Spleen (tissue), 13 donors: ENCODE measurements at regions of chr6 and their contacts with region 1.

Region 1: DNA sequence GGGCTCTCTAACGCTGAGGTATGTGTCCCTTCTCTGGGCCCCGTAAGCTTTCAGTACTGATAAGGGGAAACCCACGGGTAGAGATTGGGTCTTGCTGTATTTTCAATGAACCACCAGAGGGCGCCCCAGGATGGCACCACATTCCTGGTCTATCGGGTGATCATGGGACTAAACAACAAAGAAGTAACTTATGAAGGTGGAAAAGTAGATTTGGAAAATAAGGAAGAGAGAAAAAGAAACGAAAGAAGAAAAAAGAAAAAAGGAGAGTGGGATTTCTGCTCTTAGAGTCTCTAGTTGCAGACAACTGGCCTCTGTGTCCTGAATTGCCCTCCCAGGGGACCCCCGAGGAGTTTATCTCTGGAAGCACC is 93.8 kb downstream of the GMPR start:
- DNase-seq: peak; percentile 91
- H3K4me3 ChIP-seq: peak overlapping the region in 1 of 8 donors; percentile 34
- H3K27ac ChIP-seq: peak overlapping the region in 4 of 8 donors; percentile 19 to 49 (median 42)
- H3K4me1 ChIP-seq: peaks cover 16 to 52% (median 20%) of the 10 kb centered on the region in 6 donors
- H3K27me3 ChIP-seq: no peaks in the 10 kb centered on the region
- CTCF ChIP-seq: peak; percentile 62 to 92 (median 88)
- POLR2A ChIP-seq: no peak

Region 2: GRCh38 chr6:16183187-16183664 is 148.9 kb before region 1 on chr6:
- intact Hi-C with region 1: no loop called
- DNase-seq: no peak
- H3K4me3 ChIP-seq: no peak overlapping the region
- H3K27ac ChIP-seq: no peak overlapping the region
- H3K4me1 ChIP-seq: peaks cover 0 to 23% (median 7%) of the 10 kb centered on the region in 6 donors
- H3K27me3 ChIP-seq: peaks cover 0 to 7% (median 0%) of the 10 kb centered on the region in 7 donors
- CTCF ChIP-seq: peak; percentile 43 to 83 (median 73)
- POLR2A ChIP-seq: no peak

Region 3: GRCh38 chr6:16409531-16410441 is 77.6 kb after region 1 on chr6:
- intact Hi-C with region 1: loop called (anchors 5 kb)
- DNase-seq: peak; percentile 84
- H3K4me3 ChIP-seq: peak overlapping the region in 1 of 8 donors; percentile 20
- H3K27ac ChIP-seq: no peak overlapping the region
- H3K4me1 ChIP-seq: peaks cover 3 to 84% (median 39%) of the 10 kb centered on the region in 6 donors
- H3K27me3 ChIP-seq: no peaks in the 10 kb centered on the region
- CTCF ChIP-seq: peak; percentile 63 to 82 (median 71)
- POLR2A ChIP-seq: no peak

Region 4: DNA sequence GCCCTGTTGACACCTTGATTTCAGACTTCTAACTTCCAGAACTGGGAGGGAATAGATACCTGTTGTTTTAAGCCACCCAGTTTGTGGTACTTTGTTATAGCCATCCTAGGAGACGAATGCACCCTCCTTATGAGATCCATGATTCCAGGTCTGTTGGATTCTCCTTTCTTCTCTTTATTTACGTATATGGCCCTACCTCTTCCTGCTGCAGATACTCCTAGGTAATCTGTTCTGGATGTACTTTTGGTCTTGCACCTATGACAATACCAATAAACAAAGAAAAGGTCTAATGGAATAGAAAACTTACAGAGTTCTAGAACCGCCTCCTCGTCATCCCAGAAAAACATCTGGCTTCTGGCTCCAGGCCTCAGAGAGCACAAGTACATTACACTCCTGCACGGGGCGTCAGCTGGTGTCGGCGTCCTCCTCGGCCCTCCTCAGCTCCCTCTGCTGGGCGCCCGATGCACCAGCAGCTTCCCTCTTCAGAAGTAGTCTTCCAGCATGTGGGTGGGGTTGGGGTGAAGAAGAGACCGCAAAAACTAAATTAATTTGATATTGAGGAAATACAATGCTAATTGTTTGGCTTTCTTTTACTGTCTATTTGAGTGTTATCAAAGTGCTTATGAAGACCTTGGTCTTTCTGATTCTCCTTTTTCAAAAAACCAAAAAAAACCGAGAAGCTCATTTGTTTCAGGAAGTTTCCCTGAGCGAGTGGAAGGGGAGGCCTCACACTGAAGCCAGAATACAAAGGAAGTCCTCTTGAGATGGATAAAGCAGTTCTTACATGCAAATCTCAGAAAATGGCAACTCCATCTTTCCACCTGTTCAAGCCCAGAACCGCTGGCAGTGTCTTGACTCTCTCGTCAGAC is 438.8 kb after region 1 on chr6:
- intact Hi-C with region 1: loop called (anchors 5 kb)
- DNase-seq: peak; percentile 96
- H3K4me3 ChIP-seq: no peak overlapping the region
- H3K27ac ChIP-seq: peak overlapping the region in 6 of 8 donors; percentile 34 to 75 (median 40)
- H3K4me1 ChIP-seq: peaks cover 13 to 52% (median 33%) of the 10 kb centered on the region in 6 donors
- H3K27me3 ChIP-seq: no peaks in the 10 kb centered on the region
- CTCF ChIP-seq: peak; percentile 68 to 96 (median 92)
- POLR2A ChIP-seq: no peak